AG04450 (cell line): ENCODE measurements at regions of chr22 and their contacts with region 1.

Region 1: GRCh38 chr22:22422629-22423112 is 85.9 kb downstream of the ZNF280B start:
- DNase-seq: peak; percentile 11
- H3K4me3 ChIP-seq: no peak overlapping the region
- H3K27ac ChIP-seq: no peak overlapping the region
- H3K27me3 ChIP-seq: peaks cover 4% of the 10 kb centered on the region
- CTCF ChIP-seq: peak; percentile 93

Region 2: DNA sequence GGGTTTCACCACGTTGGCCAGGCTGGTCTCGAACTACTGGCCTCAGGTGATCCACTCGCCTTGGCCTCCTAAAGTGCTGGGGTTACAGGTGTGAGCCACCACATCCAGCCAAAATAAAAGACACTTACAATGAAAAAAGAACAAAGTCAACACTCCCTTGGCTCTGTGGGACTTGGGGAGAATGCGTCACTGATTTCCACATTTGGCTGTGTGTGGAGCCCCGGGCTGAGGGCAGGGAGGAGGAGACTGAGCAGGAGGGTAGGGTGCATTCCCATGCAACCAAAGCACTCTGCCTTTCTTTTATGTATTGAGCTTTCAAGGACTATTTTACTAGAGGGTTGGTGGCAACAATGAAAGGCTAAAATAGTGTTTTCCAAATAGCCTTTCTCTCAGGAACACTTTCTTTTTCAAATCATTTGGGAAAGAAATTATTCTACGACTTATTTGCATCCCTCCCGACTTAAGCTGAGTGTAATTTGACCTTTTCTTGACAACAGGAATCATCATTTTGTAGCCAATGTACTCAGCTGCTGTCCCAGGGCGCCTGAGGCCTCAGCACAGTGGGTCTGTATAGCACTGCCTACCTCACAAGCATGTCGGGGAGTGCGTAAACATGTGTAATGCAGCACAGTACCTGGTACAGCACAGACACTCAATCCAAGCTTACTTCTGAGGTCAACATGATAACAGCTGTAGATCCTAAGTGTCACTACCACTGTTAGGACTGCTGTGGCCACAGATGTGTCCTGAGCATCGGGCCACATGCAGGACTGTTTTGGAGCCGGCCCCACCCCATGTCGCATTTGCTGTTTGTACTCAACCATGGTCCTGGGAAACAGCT is 1658.8 kb before region 1 on chr22:
- CTCF ChIA-PET with region 1: no interaction called
- POLR2A ChIA-PET with region 1: no interaction called
- DNase-seq: no peak
- H3K4me3 ChIP-seq: no peak overlapping the region
- H3K27ac ChIP-seq: no peak overlapping the region
- H3K27me3 ChIP-seq: no peaks in the 10 kb centered on the region
- CTCF ChIP-seq: no peak

Region 3: GRCh38 chr22:21938071-21938822 is 484.4 kb before region 1 on chr22:
- CTCF ChIA-PET with region 1: no interaction called
- POLR2A ChIA-PET with region 1: no interaction called
- DNase-seq: peak; percentile 85
- H3K4me3 ChIP-seq: peak overlapping the region; percentile 59
- H3K27ac ChIP-seq: peak overlapping the region; percentile 97
- H3K27me3 ChIP-seq: no peaks in the 10 kb centered on the region
- CTCF ChIP-seq: peak; percentile 97

Region 4: GRCh38 chr22:22207845-22208564 is 214.7 kb before region 1 on chr22:
- CTCF ChIA-PET with region 1: interaction called, 25 read pairs
- POLR2A ChIA-PET with region 1: no interaction called
- DNase-seq: peak; percentile 39
- H3K4me3 ChIP-seq: no peak overlapping the region
- H3K27ac ChIP-seq: no peak overlapping the region
- H3K27me3 ChIP-seq: peaks cover 10% of the 10 kb centered on the region
- CTCF ChIP-seq: peak; percentile 83

Region 5: GRCh38 chr22:22394591-22394990 is 28.1 kb before region 1 on chr22:
- CTCF ChIA-PET with region 1: interaction called, 14 read pairs
- POLR2A ChIA-PET with region 1: no interaction called
- DNase-seq: no peak
- H3K4me3 ChIP-seq: no peak overlapping the region
- H3K27ac ChIP-seq: no peak overlapping the region
- H3K27me3 ChIP-seq: no peaks in the 10 kb centered on the region
- CTCF ChIP-seq: no peak

Region 6: GRCh38 chr22:22403771-22404170 is 18.9 kb before region 1 on chr22:
- CTCF ChIA-PET with region 1: interaction called, 13 read pairs
- POLR2A ChIA-PET with region 1: no interaction called
- DNase-seq: no peak
- H3K4me3 ChIP-seq: no peak overlapping the region
- H3K27ac ChIP-seq: no peak overlapping the region
- H3K27me3 ChIP-seq: peaks cover 7% of the 10 kb centered on the region
- CTCF ChIP-seq: no peak